ENCODE measurements at regions of chr2 and their contacts with region 1.

Region 1: DNA sequence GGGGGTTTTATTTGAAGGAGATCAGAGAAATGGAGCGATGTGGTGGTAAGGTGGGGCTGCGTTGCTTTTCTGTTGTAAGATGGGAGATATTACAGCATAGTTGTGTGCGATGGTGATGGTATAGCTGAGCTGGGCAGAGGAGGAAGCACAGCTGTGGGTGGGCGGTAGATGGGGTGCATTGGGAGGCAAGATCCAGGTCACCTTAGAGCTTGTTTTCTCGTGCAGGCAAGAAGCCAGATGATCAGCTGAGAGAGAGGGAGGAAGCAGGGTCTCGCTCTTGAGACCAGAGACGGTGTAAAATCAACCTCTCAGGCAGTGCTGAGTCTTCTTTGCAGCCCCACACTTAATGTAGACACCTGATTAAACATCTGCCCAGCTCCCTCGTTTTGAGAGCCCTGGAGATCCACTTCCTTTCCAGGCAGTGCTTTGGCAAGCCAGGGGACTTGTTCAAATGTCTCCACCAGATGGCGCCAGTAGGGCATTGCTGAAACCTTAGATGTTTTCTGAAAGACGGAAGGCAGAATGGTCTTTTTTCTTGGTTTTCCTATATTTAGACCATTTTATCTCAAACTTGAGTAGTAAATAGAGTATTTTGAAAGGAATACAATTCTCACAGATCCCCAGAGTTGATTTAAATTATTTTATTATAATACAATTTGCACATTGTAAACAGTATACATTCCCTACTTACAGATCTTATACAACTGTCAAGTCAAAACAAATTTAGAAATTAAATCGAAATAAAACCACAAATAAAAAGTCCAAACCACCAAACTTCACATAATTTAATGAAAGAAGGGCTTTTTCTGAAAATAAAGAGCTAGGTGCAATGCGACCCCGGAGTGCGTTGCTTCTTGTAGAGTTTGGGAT is 21.1 kb upstream of the LYPD6B start:
- DNase-seq: peak; percentile 64

Region 2: DNA sequence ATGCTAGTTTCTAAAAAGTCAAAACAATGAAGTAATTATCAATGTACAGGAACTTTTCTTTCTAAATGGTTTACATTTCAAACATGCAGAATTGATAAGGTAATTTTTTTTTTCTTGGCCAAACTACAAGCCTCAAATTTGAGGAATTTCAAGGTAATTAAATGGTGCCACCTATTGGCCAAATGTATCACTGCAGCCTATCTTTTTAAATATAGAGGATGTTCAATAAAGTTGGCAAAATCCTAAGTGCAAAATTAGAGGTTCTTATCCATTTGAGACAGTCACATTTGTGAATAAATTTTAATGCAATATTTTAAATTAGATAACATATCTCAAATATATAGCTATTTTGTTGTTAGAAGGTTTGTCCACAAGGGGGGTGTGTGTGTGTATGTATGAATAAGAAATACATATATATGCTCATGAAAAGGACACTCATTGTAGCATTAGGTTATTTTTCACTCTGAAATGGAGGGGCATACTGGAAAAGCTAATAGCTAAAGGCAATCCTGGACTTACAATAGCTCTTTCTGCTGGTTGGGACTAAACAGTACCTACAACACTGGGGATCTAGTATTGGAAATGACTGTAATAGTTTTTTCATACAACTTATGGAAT is 544.1 kb after region 1 on chr2:
- in situ Hi-C with region 1: loop called (anchors 25 kb)
- DNase-seq: peak; percentile 61

Region 3: DNA sequence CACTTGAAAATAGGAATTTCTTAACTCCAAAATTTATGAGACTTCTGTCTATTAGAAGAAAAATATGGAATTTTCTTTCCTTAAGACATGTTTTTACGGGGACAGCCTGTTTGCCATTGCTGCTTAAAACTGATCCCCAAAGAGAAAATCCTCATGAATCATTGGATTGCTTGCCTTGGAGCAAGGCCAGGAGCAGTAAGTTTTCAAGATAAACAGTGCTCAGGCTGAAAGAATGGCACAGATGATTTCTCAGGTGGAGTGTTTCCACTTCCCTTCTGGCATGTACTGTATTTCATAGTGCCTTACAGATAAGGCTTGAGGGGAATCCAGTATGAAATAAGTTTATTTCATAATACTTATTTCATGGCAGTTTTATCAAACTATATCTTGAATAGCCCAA is 644.5 kb after region 1 on chr2:
- in situ Hi-C with region 1: no loop called
- DNase-seq: no peak

Measured in KBM-7 (cell line).